Caco-2 (cell line): ENCODE measurements at regions of chr14 and their contacts with region 1.

Region 1: DNA sequence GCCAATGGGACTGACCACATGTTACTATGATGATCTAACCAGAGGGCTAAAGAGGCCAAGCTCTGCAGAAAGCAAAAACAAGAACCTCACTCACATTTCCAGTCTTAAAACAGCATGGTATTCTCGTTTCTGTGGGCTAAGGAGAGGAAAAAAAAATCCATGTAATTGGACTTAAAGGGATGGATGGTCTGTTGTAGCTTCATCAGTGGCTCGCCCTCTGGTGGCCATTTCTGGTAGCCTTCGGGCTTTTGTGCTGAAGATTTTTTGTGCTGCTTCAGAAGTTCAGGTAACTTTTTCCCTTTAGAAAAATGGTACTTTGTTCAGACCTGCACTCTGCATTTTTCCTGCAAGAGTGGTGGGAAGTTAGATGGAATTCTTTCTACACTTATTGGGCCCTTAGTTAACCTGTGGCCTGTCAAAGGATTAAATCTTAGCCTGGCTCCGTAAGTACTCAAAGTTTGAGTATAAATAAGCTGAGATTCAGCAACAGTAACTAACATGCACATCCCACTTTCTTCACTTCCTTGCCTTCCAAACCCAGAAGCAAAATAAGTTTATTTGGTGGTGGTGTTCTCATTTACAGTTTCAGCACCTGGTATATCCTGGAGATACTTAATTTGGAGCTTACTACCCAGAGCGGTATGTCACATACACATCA is 22.3 kb downstream of the DCAF4 start:
- DNase-seq: peak; percentile 57 to 73
- H3K4me3 ChIP-seq: no peak overlapping the region
- H3K4me3 Mint-ChIP-seq: no peak overlapping the region
- H3K27ac Mint-ChIP-seq: no peak overlapping the region
- H3K4me1 ChIP-seq: no peaks in the 10 kb centered on the region
- H3K4me1 Mint-ChIP-seq: no peaks in the 10 kb centered on the region
- H3K27me3 ChIP-seq: no peaks in the 10 kb centered on the region
- H3K27me3 Mint-ChIP-seq: no peaks in the 10 kb centered on the region
- CTCF ChIP-seq: peak; percentile 86 to 90

Region 2: DNA sequence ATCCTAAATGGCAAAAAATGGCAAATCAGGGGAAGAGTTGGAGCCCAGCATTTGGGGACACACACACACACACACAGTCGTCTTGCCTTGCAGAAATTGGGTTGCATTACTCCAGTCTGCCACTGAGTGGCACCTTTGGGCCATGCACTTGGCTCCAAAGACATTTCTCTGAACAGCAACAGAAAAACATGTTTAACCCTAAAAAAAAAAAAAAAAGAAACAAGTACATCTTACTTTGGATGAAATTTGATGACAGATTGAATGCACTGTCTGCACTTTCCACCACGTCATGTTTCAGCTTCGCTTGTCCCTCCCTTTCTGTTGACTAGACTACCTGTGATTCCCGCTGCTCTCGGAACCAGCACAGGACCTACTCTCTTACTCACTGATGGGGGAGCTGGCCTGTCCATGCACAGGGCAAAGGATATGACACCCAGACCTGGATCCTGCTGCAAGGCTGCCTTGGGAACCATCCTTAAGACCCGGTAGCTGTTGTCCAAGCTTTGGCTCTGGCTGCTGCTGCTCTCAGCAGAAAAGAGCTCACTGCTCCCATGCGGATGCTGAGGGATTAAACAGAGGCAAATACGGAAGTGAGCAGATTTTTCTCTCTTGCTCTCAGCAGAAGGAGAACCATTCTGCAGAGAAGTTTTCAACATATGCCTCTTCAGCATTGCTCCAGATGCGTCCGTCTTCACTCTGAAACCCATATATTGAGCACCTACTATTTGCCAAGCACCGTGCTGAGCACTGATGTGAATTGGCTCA is 431.5 kb before region 1 on chr14:
- CTCF ChIA-PET with region 1: interaction called, 34 read pairs
- POLR2A ChIA-PET with region 1: no interaction called
- intact Hi-C with region 1: loop called (anchors 1 kb)
- DNase-seq: peak; percentile 62 to 68
- H3K4me3 ChIP-seq: no peak overlapping the region
- H3K4me3 Mint-ChIP-seq: no peak overlapping the region
- H3K27ac Mint-ChIP-seq: no peak overlapping the region
- H3K4me1 ChIP-seq: no peaks in the 10 kb centered on the region
- H3K4me1 Mint-ChIP-seq: no peaks in the 10 kb centered on the region
- H3K27me3 ChIP-seq: no peaks in the 10 kb centered on the region
- H3K27me3 Mint-ChIP-seq: peaks cover 10% of the 10 kb centered on the region
- CTCF ChIP-seq: peak; percentile 74 to 76